AG04449 (cell line): ENCODE measurements at regions of chr6 and their contacts with region 1.

Region 1: GRCh38 chr6:31958741-31959739 is at the starts of genes NELFE and SKIC2:
- DNase-seq: peak; percentile 81
- H3K4me3 ChIP-seq: peak within 1 kb of the TSS; percentile 100
- CTCF ChIP-seq: no peak

Region 2: GRCh38 chr6:31971993-31972708 is 13.1 kb after region 1 on chr6 and contains the start of gene DXO:
- CTCF ChIA-PET with region 1: interaction called, 9 read pairs
- POLR2A ChIA-PET with region 1: interaction called, 16 read pairs
- DNase-seq: peak; percentile 91
- H3K4me3 ChIP-seq: peak within 1 kb of the TSS; percentile 98
- CTCF ChIP-seq: no peak